ENCODE measurements at regions of chr21 and their contacts with region 1.

Region 1: DNA sequence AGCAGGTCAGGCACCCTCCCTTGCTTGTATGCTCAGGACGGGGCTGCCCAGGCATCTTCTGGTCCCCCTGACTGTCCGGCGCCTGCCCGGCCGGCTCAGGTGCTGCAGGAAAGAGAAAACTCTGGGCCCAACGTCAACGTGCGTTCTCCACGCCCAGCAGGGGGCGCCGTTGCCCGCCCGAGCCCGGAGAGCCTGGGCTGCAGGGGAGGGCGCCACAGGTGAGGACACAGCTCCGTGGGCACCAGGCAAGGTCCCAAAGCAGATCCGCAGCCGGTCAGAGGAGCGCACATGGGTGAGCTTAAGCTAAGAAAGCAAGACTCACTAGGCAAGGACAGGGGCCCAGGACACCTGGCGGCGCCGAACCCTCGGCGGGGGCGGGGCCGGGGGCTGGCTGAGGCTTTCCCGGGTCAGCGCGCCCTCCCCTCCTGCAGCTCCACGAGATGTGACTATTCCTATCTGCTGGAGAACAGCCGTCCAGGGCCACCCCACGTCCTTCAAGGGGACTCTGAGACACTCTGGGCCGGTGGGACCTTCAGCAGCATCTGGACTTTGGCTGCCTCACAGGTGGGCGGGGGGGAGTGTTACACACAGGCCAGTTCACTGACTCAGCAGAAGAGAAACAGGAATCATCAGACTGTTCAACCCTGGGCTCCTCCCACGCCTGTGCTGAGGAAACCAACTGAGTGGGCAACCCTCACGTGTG is 29.3 kb downstream of the KRTAP10-1 start:
- DNase-seq: peak; percentile 79
- H3K4me3 Mint-ChIP-seq: no peak overlapping the region
- H3K27ac Mint-ChIP-seq: no peak overlapping the region
- H3K4me1 Mint-ChIP-seq: no peaks in the 10 kb centered on the region
- H3K27me3 Mint-ChIP-seq: no peaks in the 10 kb centered on the region

Region 2: GRCh38 chr21:44495611-44496563 is 14.8 kb before region 1 on chr21:
- CTCF ChIA-PET with region 1: interaction called, 12 read pairs
- POLR2A ChIA-PET with region 1: no interaction called
- DNase-seq: no peak
- H3K4me3 Mint-ChIP-seq: no peak overlapping the region
- H3K27ac Mint-ChIP-seq: no peak overlapping the region
- H3K4me1 Mint-ChIP-seq: peaks cover 2% of the 10 kb centered on the region
- H3K27me3 Mint-ChIP-seq: peaks cover 3% of the 10 kb centered on the region

Region 3: DNA sequence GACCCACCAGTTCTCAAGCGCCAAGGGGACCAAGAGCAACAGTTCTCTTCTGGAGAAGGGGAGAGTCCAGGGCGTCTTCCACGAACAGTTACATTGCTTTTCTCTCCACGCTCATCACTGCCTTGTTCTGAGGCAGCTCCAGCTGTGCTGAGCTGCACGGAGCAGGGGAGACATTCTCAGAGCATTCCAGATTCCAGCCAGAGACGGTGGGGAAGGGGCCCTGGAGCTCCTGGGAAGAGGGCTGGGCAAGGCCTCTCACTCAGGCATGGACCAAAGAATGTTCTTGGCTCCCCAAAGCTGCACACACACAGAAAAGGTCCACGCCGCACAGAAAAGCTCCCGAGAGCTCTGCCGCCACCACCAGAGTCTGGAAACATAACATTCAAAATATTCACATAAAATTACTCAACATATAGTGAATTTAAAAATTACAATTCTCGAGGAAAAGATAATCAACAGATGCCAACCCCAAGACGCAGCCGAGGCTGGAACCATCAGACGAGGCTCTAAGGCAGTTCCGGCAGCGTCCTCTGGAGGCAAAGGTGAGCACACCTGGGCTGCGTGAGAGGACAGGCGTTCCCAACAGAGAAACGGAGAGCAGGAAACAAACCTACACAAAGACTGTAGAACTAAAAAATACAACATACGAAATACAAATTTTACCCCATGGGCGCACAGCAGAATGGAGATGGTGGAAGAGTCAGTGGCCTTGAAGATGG is 250.5 kb after region 1 on chr21:
- CTCF ChIA-PET with region 1: interaction called, 10 read pairs
- POLR2A ChIA-PET with region 1: no interaction called
- DNase-seq: peak; percentile 22
- H3K4me3 Mint-ChIP-seq: no peak overlapping the region
- H3K27ac Mint-ChIP-seq: no peak overlapping the region
- H3K4me1 Mint-ChIP-seq: peaks cover 16% of the 10 kb centered on the region
- H3K27me3 Mint-ChIP-seq: no peaks in the 10 kb centered on the region

Region 4: GRCh38 chr21:44792702-44793591 is 282.3 kb after region 1 on chr21:
- CTCF ChIA-PET with region 1: interaction called, 13 read pairs
- POLR2A ChIA-PET with region 1: no interaction called
- DNase-seq: peak; percentile 64
- H3K4me3 Mint-ChIP-seq: no peak overlapping the region
- H3K27ac Mint-ChIP-seq: peak overlapping the region; percentile 47
- H3K4me1 Mint-ChIP-seq: peaks cover 33% of the 10 kb centered on the region
- H3K27me3 Mint-ChIP-seq: no peaks in the 10 kb centered on the region

Measured in activated CD4-positive, alpha-beta T cell treated with anti-CD3 and anti-CD28 coated beads, Interleukin-2, amount 10 ng/mL, durations not matched to agents 7 days and 5 days (primary cell).